ENCODE measurements at regions of chr5 and their contacts with region 1.

Region 1: DNA sequence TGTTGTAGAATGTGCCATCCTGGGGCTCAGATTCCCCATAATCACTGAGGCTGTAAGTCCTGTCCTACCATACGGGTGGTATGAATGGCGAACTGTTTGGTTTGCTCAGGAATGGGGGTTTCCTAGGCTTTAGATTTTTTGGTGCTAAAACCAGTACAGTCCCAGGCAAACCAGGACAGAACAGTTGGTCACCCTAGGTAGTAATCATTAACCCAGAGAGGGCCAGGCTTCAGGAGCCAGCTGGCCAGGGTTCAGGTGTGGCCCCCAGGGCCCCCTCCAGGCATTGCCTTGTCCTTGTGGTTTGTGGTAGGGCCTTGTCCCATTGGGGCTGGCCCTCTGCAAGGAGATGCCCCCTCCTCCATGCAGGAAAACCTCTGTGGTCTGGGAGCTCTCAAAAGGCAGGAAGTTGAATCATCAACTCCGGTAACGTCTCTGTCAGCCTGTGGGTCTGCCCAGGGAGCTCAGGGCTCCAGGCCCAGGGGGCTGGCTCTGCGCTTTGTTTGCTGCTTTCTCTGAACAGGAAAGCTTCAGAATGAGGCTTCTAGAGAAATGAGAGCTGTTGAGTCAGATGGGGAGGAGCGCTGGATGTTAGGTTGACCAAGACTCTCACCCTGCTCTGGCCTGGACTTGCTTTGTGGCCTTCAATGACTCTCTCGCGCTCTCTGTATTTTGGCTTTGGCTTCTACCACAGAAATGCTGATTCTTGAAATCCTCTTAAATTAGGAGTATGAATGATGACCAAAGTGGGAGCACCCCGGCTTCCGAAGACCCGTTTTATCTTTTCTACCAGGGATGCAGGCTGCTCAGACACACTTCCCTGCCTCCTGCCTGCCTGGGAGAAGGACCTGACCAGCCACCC is 22.2 kb upstream of the JADE2 start:
- DNase-seq: peak; percentile 91
- H3K4me3 Mint-ChIP-seq: peak overlapping the region; percentile 65
- H3K27ac Mint-ChIP-seq: peak overlapping the region; percentile 95
- H3K4me1 Mint-ChIP-seq: peaks cover 33% of the 10 kb centered on the region
- H3K27me3 Mint-ChIP-seq: no peaks in the 10 kb centered on the region

Region 2: DNA sequence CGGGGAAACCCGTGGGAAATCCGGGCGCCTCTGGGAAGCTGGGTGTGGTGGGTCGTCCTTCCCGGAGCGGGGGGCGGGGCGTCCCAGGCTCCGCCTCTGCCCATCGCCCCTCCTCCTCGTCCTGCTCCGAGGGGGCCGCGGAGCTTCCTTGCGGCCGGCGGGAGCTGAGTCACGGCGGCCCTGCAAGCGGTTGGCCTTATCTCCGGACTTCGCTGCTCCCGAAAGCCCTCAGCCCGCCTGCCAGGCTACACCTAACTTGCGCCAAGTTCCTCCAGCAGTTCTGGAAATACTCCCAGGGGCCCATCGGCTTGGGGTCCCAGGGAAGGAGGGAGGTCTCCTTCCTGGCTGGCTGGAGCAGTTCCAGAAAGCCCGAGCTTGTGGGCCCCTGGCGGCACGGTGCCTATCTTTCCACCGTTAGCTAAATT is 37.5 kb before region 1 on chr5:
- intact Hi-C with region 1: loop called (anchors 2 kb)
- DNase-seq: peak; percentile 87
- H3K4me3 Mint-ChIP-seq: peak overlapping the region; percentile 66
- H3K27ac Mint-ChIP-seq: peak overlapping the region; percentile 57
- H3K4me1 Mint-ChIP-seq: peaks cover 15% of the 10 kb centered on the region
- H3K27me3 Mint-ChIP-seq: no peaks in the 10 kb centered on the region

Region 3: GRCh38 chr5:134568761-134569695 is 65.7 kb after region 1 on chr5:
- intact Hi-C with region 1: no loop called
- DNase-seq: no peak
- H3K4me3 Mint-ChIP-seq: no peak overlapping the region
- H3K27ac Mint-ChIP-seq: no peak overlapping the region
- H3K4me1 Mint-ChIP-seq: peaks cover 12% of the 10 kb centered on the region
- H3K27me3 Mint-ChIP-seq: no peaks in the 10 kb centered on the region

Region 4: DNA sequence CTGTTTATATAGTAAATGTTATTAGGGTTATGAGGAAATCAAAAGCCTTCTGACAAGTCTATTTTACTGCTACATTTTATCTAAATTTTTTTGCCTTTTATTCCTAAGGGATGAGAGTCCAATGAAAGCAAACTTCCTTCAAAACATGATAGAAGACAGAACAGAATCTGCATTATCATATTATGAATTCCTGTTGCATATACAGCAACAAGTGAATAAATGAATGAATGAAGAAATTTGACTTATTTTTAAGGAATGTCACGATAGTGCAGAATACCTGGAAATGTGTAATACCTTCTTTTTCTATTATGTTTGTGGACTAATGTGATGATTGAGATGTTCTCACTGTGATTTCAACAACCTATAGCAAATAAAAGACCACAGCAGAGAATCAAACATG is 221.6 kb after region 1 on chr5:
- intact Hi-C with region 1: no loop called
- DNase-seq: no peak
- H3K4me3 Mint-ChIP-seq: no peak overlapping the region
- H3K27ac Mint-ChIP-seq: no peak overlapping the region
- H3K4me1 Mint-ChIP-seq: no peaks in the 10 kb centered on the region
- H3K27me3 Mint-ChIP-seq: no peaks in the 10 kb centered on the region

Measured in activated CD4-positive, alpha-beta T cell treated with anti-CD3 and anti-CD28 coated beads, Interleukin-2, amount 10 ng/mL, durations not matched to agents 24 days and 14 days (primary cell).